H1 (cell line): ENCODE measurements at regions of chr14 and their contacts with region 1.

Region 1: GRCh38 chr14:36553656-36554260 is 28.7 kb downstream of the NKX2-8 start:
- DNase-seq: no peak
- H3K4me3 ChIP-seq: no peak overlapping the region
- H3K27ac ChIP-seq: no peak overlapping the region
- H3K4me1 ChIP-seq: peaks cover 0 to 6% (median 4%) of the 10 kb centered on the region in 4 experiments; a peak in 2 of 7 replicates
- H3K27me3 ChIP-seq: no peaks in the 10 kb centered on the region; a peak in 1 of 7 replicates
- CTCF ChIP-seq: peak in 2 of 3 experiments; percentile 62 to 64; a peak in 2 of 4 replicates
- EP300 ChIP-seq: no peak
- POLR2A ChIP-seq: no peak
- RAD21 ChIP-seq: peak; percentile 69 to 70

Region 2: GRCh38 chr14:36451301-36452065 is 102.3 kb before region 1 on chr14:
- CTCF ChIA-PET with region 1: interaction called, 12 read pairs
- POLR2A ChIA-PET with region 1: no interaction called
- DNase-seq: no peak
- H3K4me3 ChIP-seq: no peak overlapping the region
- H3K27ac ChIP-seq: no peak overlapping the region
- H3K4me1 ChIP-seq: no peaks in the 10 kb centered on the region; a peak in 1 of 7 replicates
- H3K27me3 ChIP-seq: peaks cover 0 to 13% (median 3%) of the 10 kb centered on the region in 4 experiments; a peak in 5 of 7 replicates
- CTCF ChIP-seq: no peak
- EP300 ChIP-seq: no peak
- POLR2A ChIP-seq: no peak
- RAD21 ChIP-seq: no peak

Region 3: GRCh38 chr14:36538051-36538450 is 15.7 kb before region 1 on chr14:
- CTCF ChIA-PET with region 1: interaction called, 58 read pairs
- POLR2A ChIA-PET with region 1: no interaction called
- DNase-seq: no peak
- H3K4me3 ChIP-seq: no peak overlapping the region
- H3K27ac ChIP-seq: no peak overlapping the region
- H3K4me1 ChIP-seq: no peaks in the 10 kb centered on the region
- H3K27me3 ChIP-seq: peaks cover 0 to 2% (median 0%) of the 10 kb centered on the region in 4 experiments; a peak in 1 of 7 replicates
- CTCF ChIP-seq: no peak
- EP300 ChIP-seq: no peak
- POLR2A ChIP-seq: no peak
- RAD21 ChIP-seq: no peak

Region 4: DNA sequence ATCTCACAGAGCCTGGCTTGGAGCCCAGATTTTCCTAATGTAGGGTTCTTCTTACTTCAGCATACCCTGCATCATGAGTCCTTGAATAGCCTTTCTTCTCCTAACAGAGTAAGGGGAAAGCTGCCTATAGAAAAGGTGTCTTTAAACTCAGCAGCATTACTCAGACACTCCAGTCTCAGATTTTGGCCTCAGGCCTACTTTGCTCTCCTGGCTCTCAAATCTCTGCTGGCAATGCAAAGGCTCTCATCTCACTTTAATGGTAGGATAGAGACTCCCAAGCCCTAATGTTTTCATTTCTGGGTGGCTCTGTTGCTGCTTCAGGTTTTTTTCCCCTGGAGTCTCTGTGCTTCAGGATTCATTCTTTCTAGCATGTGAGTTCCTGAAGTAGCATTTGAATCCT is 37.7 kb after region 1 on chr14:
- CTCF ChIA-PET with region 1: interaction called, 25 read pairs
- POLR2A ChIA-PET with region 1: no interaction called
- DNase-seq: no peak
- H3K4me3 ChIP-seq: no peak overlapping the region
- H3K27ac ChIP-seq: no peak overlapping the region
- H3K4me1 ChIP-seq: peaks cover 0 to 5% (median 0%) of the 10 kb centered on the region in 4 experiments; a peak in 2 of 7 replicates
- H3K27me3 ChIP-seq: peaks cover 31 to 73% (median 58%) of the 10 kb centered on the region in 4 experiments
- CTCF ChIP-seq: no peak
- EP300 ChIP-seq: no peak
- POLR2A ChIP-seq: no peak
- RAD21 ChIP-seq: no peak

Region 5: DNA sequence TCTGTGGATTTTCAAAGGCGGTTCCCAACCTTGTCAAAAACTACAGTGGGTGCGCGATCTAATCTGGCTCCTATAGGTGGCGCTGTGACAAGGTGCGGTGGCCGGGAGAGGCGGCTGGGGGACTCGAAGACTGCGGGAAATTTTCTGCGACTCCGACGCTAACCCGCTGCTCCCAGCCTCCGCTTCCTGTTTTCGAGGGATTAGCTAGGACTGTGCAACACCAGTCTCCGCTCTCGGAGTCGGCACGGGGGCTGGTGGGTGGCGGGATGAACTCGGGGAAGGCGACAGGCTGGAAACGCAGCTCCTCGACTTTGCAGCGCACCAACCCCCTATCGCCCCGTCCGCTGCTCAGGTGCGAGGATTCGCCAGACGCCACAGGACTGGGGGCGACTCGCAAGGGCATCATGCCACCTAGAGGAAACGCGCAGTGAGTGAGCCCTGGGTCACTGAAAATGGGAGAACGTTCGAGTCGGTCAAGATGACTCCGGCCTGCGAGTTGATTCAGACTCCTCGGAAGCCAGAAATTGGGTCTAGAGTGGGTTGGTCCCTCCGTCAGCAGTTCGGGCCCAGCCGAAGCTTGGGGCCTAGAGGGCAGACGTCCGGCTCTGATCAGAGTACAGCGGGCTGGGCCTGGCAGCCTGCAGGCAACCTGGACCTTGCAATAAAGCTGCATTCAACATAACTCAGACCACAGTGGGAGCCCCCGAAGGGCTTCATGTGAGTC is 102.4 kb after region 1 on chr14:
- CTCF ChIA-PET with region 1: interaction called, 10 read pairs
- POLR2A ChIA-PET with region 1: no interaction called
- DNase-seq: peak in 1 of 2 experiments; percentile 91
- H3K4me3 ChIP-seq: peak overlapping the region; percentile 8 to 53 (median 20); a peak in 5 of 8 replicates
- H3K27ac ChIP-seq: no peak overlapping the region
- H3K4me1 ChIP-seq: peaks cover 0 to 25% (median 13%) of the 10 kb centered on the region in 4 experiments; a peak in 5 of 7 replicates
- H3K27me3 ChIP-seq: peaks cover 95 to 100% (median 98%) of the 10 kb centered on the region in 4 experiments
- CTCF ChIP-seq: peak in 2 of 3 experiments; percentile 62 to 80; a peak in 3 of 4 replicates
- EP300 ChIP-seq: no peak
- POLR2A ChIP-seq: no peak
- RAD21 ChIP-seq: peak; percentile 35 to 58

Region 6: GRCh38 chr14:36773136-36773540 is 219.4 kb after region 1 on chr14:
- CTCF ChIA-PET with region 1: no interaction called
- POLR2A ChIA-PET with region 1: no interaction called
- DNase-seq: no peak
- H3K4me3 ChIP-seq: no peak overlapping the region
- H3K27ac ChIP-seq: no peak overlapping the region
- H3K4me1 ChIP-seq: peaks cover 0 to 4% (median 1%) of the 10 kb centered on the region in 4 experiments; a peak in 3 of 7 replicates
- H3K27me3 ChIP-seq: no peaks in the 10 kb centered on the region
- CTCF ChIP-seq: peak in 2 of 3 experiments; percentile 36 to 42; a peak in 2 of 4 replicates
- EP300 ChIP-seq: no peak
- POLR2A ChIP-seq: no peak
- RAD21 ChIP-seq: peak; percentile 46 to 54